ENCODE measurements at regions of chr15 and their contacts with region 1.

Region 1: GRCh38 chr15:89177633-89178306 is 43.6 kb downstream of the RLBP1 start:
- H3K4me3 ChIP-seq: no peak overlapping the region
- H3K27ac ChIP-seq: no peak overlapping the region
- H3K4me1 ChIP-seq: peaks cover 10% of the 10 kb centered on the region
- CTCF ChIP-seq: peak; percentile 81

Region 2: DNA sequence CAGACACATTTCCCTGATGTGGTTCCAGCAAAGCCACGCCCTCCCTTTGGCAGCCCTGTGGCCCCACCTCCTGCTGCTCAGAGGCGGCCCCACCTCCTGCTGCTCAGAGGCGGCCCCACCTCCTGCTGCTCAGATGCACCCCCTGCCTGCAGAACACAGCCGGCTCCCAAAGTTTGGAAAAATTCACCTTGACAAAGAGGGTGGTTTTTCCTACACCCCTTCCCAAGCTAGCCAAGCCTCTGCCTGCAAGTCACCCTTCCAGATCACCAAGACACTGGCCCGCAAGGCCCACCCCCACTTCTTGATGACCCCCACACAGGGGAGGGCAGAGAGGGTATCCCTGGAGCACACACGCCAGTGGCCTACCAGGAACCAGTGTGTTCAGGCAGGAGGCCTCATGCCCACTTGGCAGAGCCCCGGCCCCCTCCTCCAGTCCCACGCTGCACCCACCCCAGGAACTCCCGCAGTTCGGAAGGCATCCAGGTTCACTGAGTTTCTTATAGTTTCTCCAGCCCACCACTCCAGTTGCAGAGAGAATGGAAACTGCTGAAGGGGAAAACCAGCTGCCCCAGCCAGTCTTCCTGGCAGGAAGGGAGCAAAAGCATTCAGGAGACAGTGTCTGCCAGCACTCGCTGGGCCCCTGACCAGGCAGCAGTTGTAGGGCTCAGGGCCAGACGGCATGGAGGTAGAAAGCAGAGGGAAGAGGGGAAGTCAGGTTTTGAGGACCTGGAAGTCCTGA is 280.1 kb before region 1 on chr15:
- CTCF ChIA-PET with region 1: interaction called, 56 read pairs
- POLR2A ChIA-PET with region 1: no interaction called
- H3K4me3 ChIP-seq: no peak overlapping the region
- H3K27ac ChIP-seq: peak overlapping the region; percentile 34; the same call in 1 of the 2 replicates
- H3K4me1 ChIP-seq: peaks cover 15% of the 10 kb centered on the region
- CTCF ChIP-seq: peak; percentile 78

Region 3: DNA sequence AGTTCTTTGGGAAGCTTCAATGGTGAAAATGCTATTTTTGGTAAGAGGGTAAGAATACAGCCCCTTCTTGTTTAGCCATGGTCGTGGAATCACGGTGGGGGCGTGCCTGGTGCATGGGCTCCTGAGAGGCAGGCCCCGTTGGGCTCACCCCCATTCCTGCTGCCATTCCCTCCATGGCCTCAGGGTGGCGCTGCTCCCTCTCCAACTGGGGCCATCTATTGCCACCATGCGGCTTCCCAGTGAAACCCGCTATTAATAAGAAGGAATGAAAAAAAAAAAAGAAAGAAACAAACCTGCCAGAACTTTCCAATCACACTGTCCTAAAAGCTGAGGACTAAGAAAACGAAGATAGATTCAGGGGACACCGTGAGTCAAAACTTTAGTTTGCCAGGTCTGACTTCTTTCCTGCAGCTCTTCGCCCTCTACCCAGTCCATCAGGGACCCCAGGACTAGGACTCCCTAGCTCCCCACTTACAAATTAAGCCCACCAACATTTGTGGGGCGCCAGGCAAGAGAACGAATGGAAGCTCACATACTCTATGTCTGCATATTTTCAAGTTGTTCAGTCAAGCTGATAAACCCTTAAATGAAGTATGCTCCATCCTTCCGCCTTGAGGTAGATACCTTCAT is 120.2 kb before region 1 on chr15:
- CTCF ChIA-PET with region 1: interaction called, 480 read pairs
- POLR2A ChIA-PET with region 1: no interaction called
- H3K4me3 ChIP-seq: no peak overlapping the region
- H3K27ac ChIP-seq: no peak overlapping the region
- H3K4me1 ChIP-seq: no peaks in the 10 kb centered on the region
- CTCF ChIP-seq: peak; percentile 87; the same call in 1 of the 2 replicates

Region 4: GRCh38 chr15:89112341-89112971 is 65.3 kb before region 1 on chr15:
- CTCF ChIA-PET with region 1: interaction called, 12 read pairs
- POLR2A ChIA-PET with region 1: no interaction called
- H3K4me3 ChIP-seq: no peak overlapping the region
- H3K27ac ChIP-seq: no peak overlapping the region
- H3K4me1 ChIP-seq: no peaks in the 10 kb centered on the region; the same call in 1 of the 2 replicates
- CTCF ChIP-seq: no peak

Region 5: DNA sequence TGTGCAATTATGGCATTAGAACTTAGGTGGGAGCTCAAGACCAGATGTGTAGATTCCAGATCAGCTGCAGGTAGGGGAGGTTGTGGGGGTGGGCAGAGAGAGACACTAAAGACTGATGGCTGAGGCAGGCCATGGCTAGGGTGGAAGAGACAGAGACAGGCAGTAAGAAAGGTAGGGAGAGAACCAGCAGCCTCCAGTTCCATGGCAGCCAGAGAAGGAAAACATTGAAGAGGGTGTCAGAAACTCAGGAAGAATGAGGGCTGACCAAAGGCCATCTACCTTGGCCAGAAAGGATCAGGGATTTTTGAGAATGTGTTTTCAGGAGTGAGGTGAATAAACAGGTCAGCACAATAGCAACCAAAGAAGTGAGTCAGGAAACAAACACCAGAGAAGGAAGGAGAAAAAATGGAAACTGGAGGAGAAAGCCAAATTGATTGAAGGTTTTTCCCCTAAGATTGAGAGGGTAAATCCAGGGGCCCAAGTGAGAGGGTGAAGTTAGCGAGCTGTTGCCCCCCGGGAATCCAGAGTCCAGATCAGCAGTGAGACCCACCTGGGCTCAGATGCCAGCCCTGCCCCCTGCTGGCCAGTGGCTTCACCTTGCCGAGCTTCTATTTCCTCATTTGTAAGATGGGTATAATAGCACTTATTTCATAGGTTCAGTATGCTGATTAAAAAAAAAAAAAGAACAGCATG is 48.5 kb before region 1 on chr15:
- CTCF ChIA-PET with region 1: interaction called, 87 read pairs
- POLR2A ChIA-PET with region 1: no interaction called
- H3K4me3 ChIP-seq: no peak overlapping the region
- H3K27ac ChIP-seq: no peak overlapping the region
- H3K4me1 ChIP-seq: no peaks in the 10 kb centered on the region
- CTCF ChIP-seq: peak; percentile 18; the same call in 1 of the 2 replicates

Region 6: DNA sequence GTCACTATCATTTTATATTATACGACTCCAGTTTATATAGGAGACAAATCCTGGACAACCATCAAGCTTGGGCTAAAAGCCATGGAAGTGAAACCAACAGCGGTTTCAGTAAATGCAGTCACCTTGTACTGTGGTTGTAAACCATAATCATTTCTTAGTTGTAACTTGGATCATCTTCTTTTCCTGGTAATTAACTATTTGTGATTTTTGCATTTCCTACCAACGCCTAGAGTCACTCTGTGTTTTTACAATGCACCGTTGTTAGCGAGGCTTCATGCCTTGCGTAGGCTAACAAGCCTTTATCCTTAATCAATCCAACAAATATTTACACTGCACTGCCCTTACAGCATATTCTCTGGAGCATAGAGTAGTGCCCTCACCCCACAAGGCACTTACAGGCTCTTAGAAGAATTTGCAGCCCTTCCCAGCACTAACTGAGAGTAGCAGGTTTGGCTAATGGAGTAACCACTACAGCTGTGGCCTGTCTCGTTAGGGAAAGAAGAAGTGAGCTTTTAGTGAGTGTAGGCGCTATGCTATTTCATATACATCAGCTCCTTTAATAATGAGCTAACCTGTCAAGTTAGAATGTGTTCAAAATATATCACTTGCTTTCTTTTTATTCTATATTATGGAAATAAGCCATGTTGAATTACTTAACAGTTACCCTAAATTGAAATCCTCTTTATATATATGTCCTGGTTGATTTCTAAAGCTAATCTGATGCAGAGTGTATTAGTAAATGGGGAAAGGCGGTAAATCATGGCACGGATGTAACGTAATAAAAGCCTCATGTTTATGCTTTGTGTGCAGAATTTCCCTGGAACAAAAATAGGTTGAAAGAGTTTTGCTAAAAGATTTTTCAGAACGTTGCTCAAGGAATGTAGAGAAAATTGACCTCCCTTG is 26.8 kb before region 1 on chr15:
- CTCF ChIA-PET with region 1: interaction called, 11 read pairs
- POLR2A ChIA-PET with region 1: no interaction called
- H3K4me3 ChIP-seq: no peak overlapping the region
- H3K27ac ChIP-seq: no peak overlapping the region
- H3K4me1 ChIP-seq: no peaks in the 10 kb centered on the region; the same call in 1 of the 2 replicates
- CTCF ChIP-seq: no peak

Region 7: DNA sequence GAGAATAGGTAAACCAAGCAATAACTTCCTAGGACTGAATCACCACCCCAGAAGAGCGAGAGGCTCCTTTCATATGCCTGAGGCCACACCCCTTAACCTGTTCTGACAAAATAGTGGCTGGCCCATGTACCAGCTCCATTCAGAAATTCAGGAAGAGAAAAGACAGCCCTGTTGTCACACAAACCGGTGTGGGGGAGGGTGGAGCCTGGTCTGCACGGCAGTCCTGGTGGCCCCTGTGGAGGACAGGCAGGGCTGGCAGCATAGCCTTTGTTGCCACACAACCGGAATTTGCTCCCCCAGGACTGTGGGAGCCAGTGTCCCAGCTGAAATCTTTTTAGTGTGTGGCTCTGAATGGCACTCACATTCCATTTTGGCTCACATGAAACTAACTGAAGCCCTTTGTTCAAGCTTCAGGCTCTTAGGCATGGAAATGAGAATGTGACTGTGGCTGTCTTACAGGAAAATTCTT is 19.8 kb after region 1 on chr15:
- CTCF ChIA-PET with region 1: interaction called, 31 read pairs
- POLR2A ChIA-PET with region 1: no interaction called
- H3K4me3 ChIP-seq: no peak overlapping the region
- H3K27ac ChIP-seq: peak overlapping the region; percentile 19; the same call in 1 of the 2 replicates
- H3K4me1 ChIP-seq: peaks cover 22% of the 10 kb centered on the region
- CTCF ChIP-seq: no peak

Measured in HEK293 (cell line).